ENCODE measurements at regions of chr2 and their contacts with region 1.

Region 1: DNA sequence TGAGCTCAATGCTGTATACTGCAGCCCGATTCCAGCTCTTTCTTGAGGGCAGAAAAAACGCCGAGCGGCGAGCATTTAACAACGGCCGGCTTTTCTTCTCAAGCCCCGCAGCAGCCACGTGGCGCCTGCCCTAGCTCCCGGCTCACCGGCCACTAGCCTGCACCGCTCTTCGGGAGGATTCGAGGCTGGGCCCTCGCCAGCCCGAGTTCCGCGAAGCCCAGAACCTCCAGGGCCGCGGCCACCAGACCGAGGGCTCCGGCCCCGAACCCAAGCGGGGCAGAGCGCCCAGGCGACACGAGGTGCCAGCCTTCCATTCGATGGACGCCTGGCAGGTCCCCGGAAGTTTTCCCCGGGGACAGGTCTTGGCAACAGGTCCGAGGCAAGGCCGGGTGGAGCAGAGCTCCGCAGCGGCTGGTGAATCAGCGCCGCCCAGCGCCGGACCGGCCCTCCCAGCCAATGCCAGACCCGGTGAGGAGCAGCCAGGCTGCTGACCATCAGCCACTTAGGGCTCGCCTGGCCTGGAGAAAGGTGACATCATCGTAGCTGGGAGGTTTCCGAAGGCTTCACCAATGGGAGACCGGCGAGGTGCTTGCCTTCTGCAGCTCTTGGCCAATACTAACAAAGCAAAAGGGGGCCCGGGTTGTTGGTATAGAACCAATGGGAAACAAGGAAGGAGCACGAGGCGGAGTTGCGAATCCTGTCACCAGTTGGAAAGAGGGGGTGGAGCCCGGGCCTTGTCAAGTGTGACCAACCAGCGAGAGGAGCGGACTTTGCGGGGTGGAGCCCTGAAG is 544 bp upstream of the MXD1 start:
- DNase-seq: peak; percentile 100
- ATAC-seq: peak; percentile 96
- H3K4me3 Mint-ChIP-seq: peak overlapping the region; percentile 81
- H3K27ac Mint-ChIP-seq: peak overlapping the region; percentile 89
- H3K4me1 Mint-ChIP-seq: peaks cover 35% of the 10 kb centered on the region
- H3K27me3 Mint-ChIP-seq: no peaks in the 10 kb centered on the region

Region 2: DNA sequence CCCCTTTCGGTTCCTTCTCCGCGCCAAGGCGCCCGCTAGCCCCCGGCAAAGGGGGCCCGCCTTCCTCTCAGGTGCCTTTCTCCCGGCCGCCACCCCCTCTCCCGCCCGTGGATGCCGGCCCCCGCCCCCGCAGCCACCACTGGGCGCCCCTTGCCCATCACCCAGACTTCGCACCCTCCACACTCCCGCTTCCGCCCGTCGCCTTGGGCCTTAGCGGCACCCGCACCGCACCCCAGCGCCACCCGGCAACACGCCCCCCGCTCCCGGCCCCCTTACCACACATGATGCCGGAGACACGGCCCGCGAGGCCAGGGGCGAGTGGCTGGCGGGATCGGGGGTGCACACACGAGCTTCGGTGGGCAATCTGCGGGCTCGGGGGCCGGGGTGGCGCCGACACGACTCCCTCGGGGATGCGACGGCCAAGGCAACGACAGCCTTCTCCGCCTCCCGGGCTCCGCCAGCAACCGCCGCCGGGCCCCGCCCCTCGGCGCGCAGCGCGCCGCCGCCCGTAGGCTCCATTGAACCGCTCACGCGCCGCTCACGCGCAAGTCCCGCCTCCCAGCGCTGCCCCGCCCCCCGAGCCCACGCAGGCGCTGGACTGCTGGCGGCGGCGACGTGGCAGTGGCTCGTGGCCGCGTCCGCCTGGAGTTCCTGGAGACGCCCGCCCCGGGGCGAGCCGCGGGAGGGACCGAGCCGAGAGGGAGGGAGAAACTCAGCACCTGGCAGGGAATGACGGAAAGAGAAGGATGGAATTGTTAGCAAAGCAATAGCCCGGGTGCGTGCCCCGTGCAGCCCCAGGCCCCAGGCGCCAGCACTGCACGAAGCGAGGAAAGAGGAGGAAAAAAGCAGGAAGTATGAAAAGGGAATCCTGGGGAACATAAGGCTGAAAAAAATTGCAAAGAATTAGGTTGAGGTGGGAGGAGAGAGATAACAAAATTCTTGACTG is 527.3 kb before region 1 on chr2 and contains the start of gene GFPT1:
- CTCF ChIA-PET with region 1: no interaction called
- POLR2A ChIA-PET with region 1: no interaction called
- intact Hi-C with region 1: loop called in 1 of 2 experiments (anchors 1 kb)
- DNase-seq: peak; percentile 96
- ATAC-seq: peak; percentile 96
- H3K4me3 Mint-ChIP-seq: peak within 1 kb of the TSS; percentile 81
- H3K27ac Mint-ChIP-seq: peak within 1 kb of the TSS; percentile 92
- H3K4me1 Mint-ChIP-seq: peaks cover 45% of the 10 kb centered on the region
- H3K27me3 Mint-ChIP-seq: no peaks in the 10 kb centered on the region
- total RNA-seq, gene GFPT1: 31.0 to 36.1 TPM

Region 3: GRCh38 chr2:69428981-69429380 is 485.4 kb before region 1 on chr2:
- CTCF ChIA-PET with region 1: no interaction called
- POLR2A ChIA-PET with region 1: no interaction called
- intact Hi-C with region 1: no loop called
- DNase-seq: no peak
- ATAC-seq: no peak
- H3K4me3 Mint-ChIP-seq: no peak overlapping the region
- H3K27ac Mint-ChIP-seq: no peak overlapping the region
- H3K4me1 Mint-ChIP-seq: no peaks in the 10 kb centered on the region
- H3K27me3 Mint-ChIP-seq: no peaks in the 10 kb centered on the region

Region 4: DNA sequence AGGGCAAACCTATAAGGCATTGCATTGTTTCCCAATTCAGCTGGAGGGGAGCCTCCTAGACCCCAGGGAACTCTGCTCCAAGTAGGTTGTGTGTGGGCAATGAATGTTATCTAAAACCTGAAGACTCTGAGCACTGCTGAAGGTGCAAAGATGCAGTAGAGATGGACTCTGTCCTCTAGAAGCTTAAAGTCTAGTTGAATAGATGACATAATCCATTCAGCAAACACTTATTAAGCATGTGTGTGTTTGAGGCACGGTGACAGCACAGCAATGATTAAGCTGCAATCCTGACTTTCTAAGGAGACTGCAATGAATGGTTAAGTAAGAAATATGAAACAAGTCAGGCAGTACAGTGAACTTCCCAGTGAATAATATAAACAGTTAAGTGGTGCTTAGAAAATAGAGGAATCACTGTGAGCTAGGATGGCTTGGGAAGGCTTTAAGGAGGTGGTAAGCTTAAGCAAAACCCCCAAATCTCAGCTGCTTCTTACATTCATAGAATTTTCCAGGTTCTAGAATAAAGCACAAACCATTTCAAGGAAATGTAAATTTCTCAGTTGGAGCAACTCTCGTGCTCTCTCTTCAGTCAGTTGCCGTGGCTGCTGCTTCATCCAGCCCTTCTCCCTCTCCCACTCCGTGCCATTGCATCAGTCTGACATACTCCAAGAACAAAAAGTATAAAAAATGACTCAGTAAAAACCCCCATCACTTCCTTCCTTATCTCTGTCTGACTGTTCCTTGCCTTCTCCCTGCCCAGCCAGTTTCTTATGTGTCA is 19.7 kb after region 1 on chr2:
- CTCF ChIA-PET with region 1: interaction called, 6 read pairs
- POLR2A ChIA-PET with region 1: interaction called, 6 read pairs
- intact Hi-C with region 1: loop called in 1 of 2 experiments (anchors 1 kb)
- DNase-seq: peak; percentile 61
- ATAC-seq: peak; percentile 81
- H3K4me3 Mint-ChIP-seq: no peak overlapping the region
- H3K27ac Mint-ChIP-seq: peak overlapping the region; percentile 77
- H3K4me1 Mint-ChIP-seq: peaks cover 34% of the 10 kb centered on the region
- H3K27me3 Mint-ChIP-seq: no peaks in the 10 kb centered on the region

Region 5: DNA sequence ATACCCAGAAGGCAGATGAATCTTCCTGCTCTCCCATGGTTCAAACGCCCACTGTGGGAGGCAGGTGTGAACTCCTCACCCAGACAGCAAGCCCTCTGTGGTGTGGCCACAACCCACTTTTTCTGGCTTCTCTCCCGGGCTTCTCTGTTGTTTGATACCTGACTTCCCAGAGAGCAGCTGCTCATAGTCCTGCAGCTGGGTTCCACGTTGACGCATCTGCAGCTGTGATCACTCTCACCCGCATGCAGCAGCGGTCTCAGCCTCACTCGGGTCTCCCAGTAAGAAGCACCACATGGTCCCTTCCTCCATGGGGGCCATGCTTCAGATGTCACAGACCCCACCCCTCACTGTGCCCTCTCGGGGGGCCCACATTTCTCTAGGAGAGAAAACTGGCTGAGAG is 43.6 kb after region 1 on chr2:
- CTCF ChIA-PET with region 1: no interaction called
- POLR2A ChIA-PET with region 1: no interaction called
- intact Hi-C with region 1: no loop called
- DNase-seq: no peak
- ATAC-seq: no peak
- H3K4me3 Mint-ChIP-seq: no peak overlapping the region
- H3K27ac Mint-ChIP-seq: no peak overlapping the region
- H3K4me1 Mint-ChIP-seq: no peaks in the 10 kb centered on the region
- H3K27me3 Mint-ChIP-seq: peaks cover 2% of the 10 kb centered on the region

Region 6: GRCh38 chr2:70124983-70125480 is 210.7 kb after region 1 on chr2:
- CTCF ChIA-PET with region 1: interaction called, 6 read pairs
- POLR2A ChIA-PET with region 1: interaction called, 20 read pairs
- intact Hi-C with region 1: no loop called
- DNase-seq: peak; percentile 74
- ATAC-seq: peak; percentile 53
- H3K4me3 Mint-ChIP-seq: peak overlapping the region; percentile 92
- H3K27ac Mint-ChIP-seq: peak overlapping the region; percentile 100
- H3K4me1 Mint-ChIP-seq: peaks cover 72% of the 10 kb centered on the region
- H3K27me3 Mint-ChIP-seq: no peaks in the 10 kb centered on the region

Region 7: DNA sequence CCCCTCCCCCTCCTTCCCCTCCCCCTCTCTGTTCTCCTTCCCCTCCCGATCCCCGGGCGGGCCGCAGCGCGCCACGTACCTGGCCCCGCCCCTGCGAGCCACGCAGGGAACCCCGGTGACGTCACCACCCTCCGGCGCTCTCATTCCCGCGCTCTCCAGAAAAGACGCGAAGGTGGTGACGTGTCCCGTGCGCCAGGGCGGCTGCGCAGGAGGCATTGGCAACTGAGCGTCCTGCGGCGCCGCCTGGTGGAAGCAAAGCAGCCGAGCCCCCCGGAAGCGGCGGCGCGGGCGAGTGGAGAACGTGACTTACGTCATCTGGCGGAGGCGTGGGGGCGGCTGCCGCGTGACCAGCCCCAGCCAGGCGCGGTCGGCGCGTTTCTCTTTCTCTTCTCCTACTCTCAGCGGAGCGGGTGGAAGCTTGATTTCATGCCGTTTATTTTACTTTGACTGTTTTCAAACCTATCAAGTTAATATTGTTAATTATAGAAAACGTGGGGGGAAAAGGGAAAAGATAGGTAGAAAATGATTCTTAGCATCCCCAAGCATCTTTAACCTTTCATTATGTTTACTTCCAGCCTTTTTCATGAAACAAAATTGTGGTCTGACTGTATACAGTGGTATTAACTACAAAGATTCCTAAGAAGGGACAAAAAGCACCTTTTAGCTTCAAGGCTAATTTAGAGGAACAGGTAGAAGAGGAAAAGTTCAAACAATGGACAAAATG is 228.4 kb after region 1 on chr2:
- CTCF ChIA-PET with region 1: interaction called, 71 read pairs
- POLR2A ChIA-PET with region 1: interaction called, 28 read pairs
- intact Hi-C with region 1: loop called (anchors 1 kb)
- DNase-seq: peak; percentile 100
- ATAC-seq: peak; percentile 57
- H3K4me3 Mint-ChIP-seq: peak overlapping the region; percentile 78
- H3K27ac Mint-ChIP-seq: peak overlapping the region; percentile 100
- H3K4me1 Mint-ChIP-seq: peaks cover 66% of the 10 kb centered on the region
- H3K27me3 Mint-ChIP-seq: no peaks in the 10 kb centered on the region

Region 8: GRCh38 chr2:70258532-70258874 is 344.1 kb after region 1 on chr2:
- CTCF ChIA-PET with region 1: interaction called, 4 read pairs
- POLR2A ChIA-PET with region 1: interaction called, 14 read pairs
- intact Hi-C with region 1: loop called in 1 of 2 experiments (anchors 10 kb)
- DNase-seq: no peak
- ATAC-seq: no peak
- H3K4me3 Mint-ChIP-seq: peak overlapping the region; percentile 80
- H3K27ac Mint-ChIP-seq: no peak overlapping the region
- H3K4me1 Mint-ChIP-seq: peaks cover 31% of the 10 kb centered on the region
- H3K27me3 Mint-ChIP-seq: no peaks in the 10 kb centered on the region

Region 9: GRCh38 chr2:70630761-70631160 is 716.4 kb after region 1 on chr2:
- CTCF ChIA-PET with region 1: no interaction called
- POLR2A ChIA-PET with region 1: no interaction called
- intact Hi-C with region 1: no loop called
- DNase-seq: no peak
- ATAC-seq: no peak
- H3K4me3 Mint-ChIP-seq: no peak overlapping the region
- H3K27ac Mint-ChIP-seq: no peak overlapping the region
- H3K4me1 Mint-ChIP-seq: no peaks in the 10 kb centered on the region
- H3K27me3 Mint-ChIP-seq: peaks cover 2% of the 10 kb centered on the region